ENCODE measurements at regions of chr15 and their contacts with region 1.

Region 1: GRCh38 chr15:51982013-51982769 is 10.6 kb upstream of the LEO1 start:
- DNase-seq: peak; percentile 92
- ATAC-seq: peak; percentile 99
- H3K4me3 ChIP-seq: peak overlapping the region; percentile 61
- H3K27ac ChIP-seq: peak overlapping the region; percentile 73
- H3K4me1 ChIP-seq: no peaks in the 10 kb centered on the region
- H3K27me3 ChIP-seq: no peaks in the 10 kb centered on the region
- CTCF ChIP-seq: peak; percentile 60 to 88 (median 80)
- EP300 ChIP-seq: no peak
- POLR2A ChIP-seq: peak; percentile 69
- RAD21 ChIP-seq: peak; percentile 96

Region 2: GRCh38 chr15:51971375-51972133 is 10.6 kb before region 1 on chr15 and contains the start of gene LEO1:
- CTCF ChIA-PET with region 1: interaction called, 4 read pairs
- POLR2A ChIA-PET with region 1: interaction called, 7 read pairs
- RAD21 ChIA-PET with region 1: interaction called, 6 read pairs
- SMC1A ChIA-PET with region 1: interaction called, 12 read pairs
- in situ Hi-C with region 1: no loop called
- intact Hi-C with region 1: no loop called
- DNase-seq: peak; percentile 88
- ATAC-seq: peak; percentile 91
- H3K4me3 ChIP-seq: peak within 1 kb of the TSS; percentile 82
- H3K27ac ChIP-seq: peak within 1 kb of the TSS; percentile 83
- H3K4me1 ChIP-seq: no peaks in the 10 kb centered on the region
- H3K27me3 ChIP-seq: no peaks in the 10 kb centered on the region
- CTCF ChIP-seq: peak; percentile 18 to 42 (median 39); a peak in 4 of 6 replicates
- EP300 ChIP-seq: no peak
- POLR2A ChIP-seq: peak; percentile 94
- RAD21 ChIP-seq: 0 out of 2 replicates have a peak, but pooled peaks have one; percentile 0
- polyA plus RNA-seq, gene LEO1: 29.5 to 35.2 TPM

Region 3: DNA sequence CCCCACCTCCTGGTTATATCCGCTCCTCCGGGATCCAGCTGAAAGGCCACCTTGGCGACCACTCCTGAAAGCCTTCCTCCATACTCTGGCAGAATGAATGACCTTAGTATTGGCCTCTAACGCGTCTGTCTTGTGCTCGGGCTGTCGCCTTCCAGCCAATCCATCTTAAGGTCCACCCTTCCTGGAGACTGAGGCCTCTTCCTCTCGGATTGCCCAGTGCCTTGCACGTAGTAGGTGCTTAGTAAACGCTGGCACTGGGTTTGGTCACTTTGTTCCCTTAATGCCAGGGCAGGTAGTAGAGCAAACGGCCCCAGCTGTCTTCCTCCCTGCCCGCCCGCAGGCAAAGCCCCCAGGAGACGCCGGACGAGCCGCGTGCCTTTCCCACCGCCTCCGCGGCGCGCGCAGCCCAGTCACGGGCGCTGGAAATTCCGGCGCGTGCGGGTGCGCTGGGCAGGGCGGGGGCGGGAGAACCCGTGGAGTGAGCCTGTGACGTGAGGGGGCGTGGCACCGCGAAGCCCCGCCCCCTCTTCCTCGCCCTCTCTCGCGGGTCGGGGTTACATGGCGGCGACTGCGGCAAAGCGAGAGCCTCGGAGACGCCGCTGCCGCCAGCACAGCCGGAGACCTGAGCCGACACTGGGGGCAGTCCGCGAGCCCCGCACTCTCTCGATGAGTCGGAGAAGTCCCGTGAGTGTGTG is 36.6 kb after region 1 on chr15 and contains the start of gene MAPK6:
- CTCF ChIA-PET with region 1: no interaction called
- POLR2A ChIA-PET with region 1: no interaction called
- RAD21 ChIA-PET with region 1: interaction called, 3 read pairs
- SMC1A ChIA-PET with region 1: interaction called, 4 read pairs
- in situ Hi-C with region 1: no loop called
- intact Hi-C with region 1: loop called (anchors 2 kb)
- DNase-seq: peak; percentile 71
- ATAC-seq: peak; percentile 69
- H3K4me3 ChIP-seq: peak within 1 kb of the TSS; percentile 91
- H3K27ac ChIP-seq: peak within 1 kb of the TSS; percentile 99
- H3K4me1 ChIP-seq: peaks cover 15% of the 10 kb centered on the region
- H3K27me3 ChIP-seq: no peaks in the 10 kb centered on the region
- CTCF ChIP-seq: no peak
- EP300 ChIP-seq: peak in 1 of 2 experiments; percentile 61; a peak in 1 of 4 replicates
- POLR2A ChIP-seq: peak; percentile 88
- RAD21 ChIP-seq: no peak
- polyA plus RNA-seq, gene MAPK6: 20.6 to 23.4 TPM

Region 4: GRCh38 chr15:52039925-52040781 is 58.0 kb after region 1 on chr15:
- CTCF ChIA-PET with region 1: interaction called, 4 read pairs
- POLR2A ChIA-PET with region 1: no interaction called
- RAD21 ChIA-PET with region 1: interaction called, 4 read pairs
- SMC1A ChIA-PET with region 1: interaction called, 6 read pairs
- in situ Hi-C with region 1: no loop called
- intact Hi-C with region 1: loop called (anchors 2 kb)
- DNase-seq: no peak
- ATAC-seq: peak; percentile 19; the same call in 1 of the 3 replicates
- H3K4me3 ChIP-seq: no peak overlapping the region
- H3K27ac ChIP-seq: no peak overlapping the region
- H3K4me1 ChIP-seq: peaks cover 10% of the 10 kb centered on the region; the same call in 1 of the 2 replicates
- H3K27me3 ChIP-seq: no peaks in the 10 kb centered on the region
- CTCF ChIP-seq: no peak
- EP300 ChIP-seq: no peak
- POLR2A ChIP-seq: no peak
- RAD21 ChIP-seq: no peak

Region 5: GRCh38 chr15:52217186-52217585 is 235.0 kb after region 1 on chr15:
- CTCF ChIA-PET with region 1: interaction called, 4 read pairs
- POLR2A ChIA-PET with region 1: no interaction called
- RAD21 ChIA-PET with region 1: interaction called, 4 read pairs
- SMC1A ChIA-PET with region 1: interaction called, 3 read pairs
- in situ Hi-C with region 1: no loop called
- intact Hi-C with region 1: loop called (anchors 5 kb)
- DNase-seq: no peak
- ATAC-seq: peak; percentile 74
- H3K4me3 ChIP-seq: no peak overlapping the region
- H3K27ac ChIP-seq: no peak overlapping the region
- H3K4me1 ChIP-seq: peaks cover 15% of the 10 kb centered on the region
- H3K27me3 ChIP-seq: no peaks in the 10 kb centered on the region
- CTCF ChIP-seq: peak; percentile 57 to 73 (median 58)
- EP300 ChIP-seq: no peak
- POLR2A ChIP-seq: no peak
- RAD21 ChIP-seq: peak; percentile 43; the same call in 1 of the 2 replicates